Calu3 (cell line): ENCODE measurements at regions of chr7 and their contacts with region 1.

Region 1: DNA sequence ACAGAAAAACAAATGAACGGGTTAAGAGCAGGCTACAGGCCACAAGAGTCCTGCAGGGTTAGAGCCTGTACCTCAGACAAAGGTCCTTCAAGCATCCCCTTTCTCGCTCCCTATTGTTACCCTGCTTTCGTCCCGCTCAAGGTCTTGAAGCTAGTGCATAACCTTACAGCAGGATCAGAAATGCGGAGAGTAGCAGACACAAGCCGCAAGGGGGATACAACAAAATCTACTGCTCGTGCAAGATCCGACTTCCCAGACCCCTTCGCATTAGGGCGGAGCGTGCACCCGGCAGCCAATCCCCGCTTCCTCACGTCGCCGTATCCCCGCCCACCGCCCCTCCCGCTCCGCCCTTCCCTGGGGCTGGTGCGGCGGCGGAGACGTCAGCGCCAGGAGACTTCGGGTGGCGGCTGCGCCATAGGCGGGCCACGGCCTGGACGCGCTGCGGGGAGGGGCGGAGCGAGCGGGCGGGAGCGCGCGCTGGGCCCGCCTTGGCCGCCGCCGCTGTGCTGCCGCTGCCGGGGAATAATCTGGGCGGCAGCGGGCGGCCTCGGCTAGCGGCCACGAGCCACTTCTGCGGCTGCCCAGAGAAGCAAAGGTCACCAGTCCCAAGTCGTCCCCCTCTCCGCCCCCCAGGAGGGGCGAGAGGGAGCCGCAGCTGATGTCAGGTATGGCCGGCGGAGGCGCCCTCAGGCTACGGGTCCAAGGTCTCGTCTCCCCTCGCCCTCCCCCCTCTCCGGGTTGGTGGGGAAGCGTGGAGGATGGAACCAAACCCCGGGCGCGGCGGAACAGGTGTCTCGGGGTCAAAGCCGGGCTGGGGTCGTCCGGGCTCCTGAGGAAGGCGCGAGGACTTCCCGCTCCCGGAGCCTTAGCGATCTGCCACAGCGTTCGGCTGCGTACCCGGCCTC is at the start of gene C1GALT1:
- DNase-seq: peak; percentile 99
- H3K4me3 Mint-ChIP-seq: peak within 1 kb of the TSS; percentile 90
- H3K27ac Mint-ChIP-seq: peak within 1 kb of the TSS; percentile 96
- H3K4me1 Mint-ChIP-seq: peaks cover 48% of the 10 kb centered on the region
- H3K27me3 Mint-ChIP-seq: no peaks in the 10 kb centered on the region
- CTCF ChIP-seq: peak; percentile 25
- total RNA-seq, gene C1GALT1: 92.2 and 97.0 TPM in 2 replicates

Region 2: GRCh38 chr7:6536262-6537260 is 645.8 kb before region 1 on chr7:
- CTCF ChIA-PET with region 1: no interaction called
- intact Hi-C with region 1: no loop called
- DNase-seq: no peak
- H3K4me3 Mint-ChIP-seq: no peak overlapping the region
- H3K27ac Mint-ChIP-seq: no peak overlapping the region
- H3K4me1 Mint-ChIP-seq: no peaks in the 10 kb centered on the region
- H3K27me3 Mint-ChIP-seq: peaks cover 86% of the 10 kb centered on the region
- CTCF ChIP-seq: no peak

Region 3: GRCh38 chr7:7416031-7416858 is 233.8 kb after region 1 on chr7:
- CTCF ChIA-PET with region 1: interaction called, 7 read pairs
- intact Hi-C with region 1: loop called (anchors 2 kb)
- DNase-seq: peak; percentile 83
- H3K4me3 Mint-ChIP-seq: peak overlapping the region; percentile 7
- H3K27ac Mint-ChIP-seq: peak overlapping the region; percentile 53
- H3K4me1 Mint-ChIP-seq: peaks cover 38% of the 10 kb centered on the region
- H3K27me3 Mint-ChIP-seq: no peaks in the 10 kb centered on the region
- CTCF ChIP-seq: no peak

Region 4: DNA sequence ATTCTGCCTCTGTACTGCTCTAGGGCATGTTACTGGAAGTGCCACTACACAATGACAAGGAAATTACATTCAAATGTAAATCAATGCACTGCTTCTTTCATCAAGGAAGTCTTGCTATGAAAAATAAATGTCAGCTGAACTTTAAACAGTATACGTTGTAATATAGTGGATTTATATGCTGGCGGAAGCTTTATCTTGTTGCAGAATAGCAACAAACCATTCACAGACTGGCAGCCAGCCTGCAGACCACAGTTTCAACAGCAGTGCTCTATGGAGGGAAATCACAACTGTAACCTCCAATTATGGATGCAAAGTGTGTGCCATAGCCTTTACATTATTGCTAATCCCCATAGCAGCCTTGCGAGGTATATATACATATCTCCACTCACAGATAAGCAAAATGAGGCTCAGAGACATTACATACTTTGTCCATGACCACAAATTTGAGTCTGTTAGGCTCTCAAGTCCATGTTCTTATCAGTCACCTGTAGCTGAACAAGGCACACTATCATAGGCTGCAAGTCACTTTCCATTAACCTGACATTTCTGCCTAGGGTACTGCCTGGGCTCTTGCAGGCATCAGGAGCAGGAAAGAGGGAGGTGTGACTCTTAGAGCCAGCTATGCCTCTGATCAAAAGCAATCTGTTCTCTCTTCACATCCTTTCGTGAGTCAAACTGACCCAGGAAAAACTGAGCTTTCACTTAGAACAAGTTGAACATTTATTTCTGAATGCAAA is 330.6 kb after region 1 on chr7:
- CTCF ChIA-PET with region 1: no interaction called
- intact Hi-C with region 1: loop called (anchors 10 kb)
- DNase-seq: peak; percentile 26
- H3K4me3 Mint-ChIP-seq: no peak overlapping the region
- H3K27ac Mint-ChIP-seq: peak overlapping the region; percentile 45
- H3K4me1 Mint-ChIP-seq: peaks cover 34% of the 10 kb centered on the region
- H3K27me3 Mint-ChIP-seq: no peaks in the 10 kb centered on the region
- CTCF ChIP-seq: no peak

Region 5: DNA sequence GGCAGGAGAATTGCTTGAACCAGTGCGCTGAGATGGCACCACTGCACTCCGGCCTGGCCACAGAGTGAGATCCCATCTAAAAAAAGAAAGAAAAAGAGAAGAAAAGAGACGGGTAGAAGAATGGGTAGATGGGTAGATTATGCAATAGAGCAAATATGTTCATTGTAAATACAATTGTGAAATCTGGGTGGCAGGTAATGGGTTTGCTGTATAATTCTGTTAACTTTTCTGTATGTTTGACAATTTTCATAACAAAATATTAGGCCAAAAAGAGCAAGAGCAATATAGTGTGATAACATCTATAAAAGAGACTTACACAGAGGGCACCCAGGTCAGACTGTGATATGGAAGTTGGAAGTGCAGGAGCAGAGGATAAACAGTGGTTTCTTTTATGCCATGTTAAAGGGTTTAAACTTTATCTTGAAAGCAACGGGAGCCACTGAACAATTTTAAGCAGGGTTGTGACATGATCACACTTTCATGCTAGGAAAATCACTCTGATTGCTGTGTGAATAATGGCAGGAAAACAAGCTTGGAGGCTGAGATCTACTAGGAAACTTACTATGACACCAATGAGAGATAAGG is 359.9 kb after region 1 on chr7:
- CTCF ChIA-PET with region 1: no interaction called
- intact Hi-C with region 1: loop called (anchors 2 kb)
- DNase-seq: no peak
- H3K4me3 Mint-ChIP-seq: no peak overlapping the region
- H3K27ac Mint-ChIP-seq: no peak overlapping the region
- H3K4me1 Mint-ChIP-seq: peaks cover 18% of the 10 kb centered on the region
- H3K27me3 Mint-ChIP-seq: no peaks in the 10 kb centered on the region
- CTCF ChIP-seq: no peak

Region 6: GRCh38 chr7:7566651-7567611 is 384.5 kb after region 1 on chr7 and contains the start of gene MIOS:
- CTCF ChIA-PET with region 1: no interaction called
- intact Hi-C with region 1: loop called (anchors 10 kb)
- DNase-seq: peak; percentile 95
- H3K4me3 Mint-ChIP-seq: no peak within 1 kb of the TSS
- H3K27ac Mint-ChIP-seq: no peak within 1 kb of the TSS
- H3K4me1 Mint-ChIP-seq: peaks cover 27% of the 10 kb centered on the region
- H3K27me3 Mint-ChIP-seq: no peaks in the 10 kb centered on the region
- CTCF ChIP-seq: no peak
- total RNA-seq, gene MIOS: 38.2 and 46.5 TPM in 2 replicates